ENCODE measurements at regions of chr11 and their contacts with region 1.

Region 1: GRCh38 chr11:61627567-61628445 is 46.9 kb upstream of the SYT7 start:
- DNase-seq: no peak
- H3K4me3 ChIP-seq: no peak overlapping the region
- CTCF ChIP-seq: peak; percentile 84

Region 2: DNA sequence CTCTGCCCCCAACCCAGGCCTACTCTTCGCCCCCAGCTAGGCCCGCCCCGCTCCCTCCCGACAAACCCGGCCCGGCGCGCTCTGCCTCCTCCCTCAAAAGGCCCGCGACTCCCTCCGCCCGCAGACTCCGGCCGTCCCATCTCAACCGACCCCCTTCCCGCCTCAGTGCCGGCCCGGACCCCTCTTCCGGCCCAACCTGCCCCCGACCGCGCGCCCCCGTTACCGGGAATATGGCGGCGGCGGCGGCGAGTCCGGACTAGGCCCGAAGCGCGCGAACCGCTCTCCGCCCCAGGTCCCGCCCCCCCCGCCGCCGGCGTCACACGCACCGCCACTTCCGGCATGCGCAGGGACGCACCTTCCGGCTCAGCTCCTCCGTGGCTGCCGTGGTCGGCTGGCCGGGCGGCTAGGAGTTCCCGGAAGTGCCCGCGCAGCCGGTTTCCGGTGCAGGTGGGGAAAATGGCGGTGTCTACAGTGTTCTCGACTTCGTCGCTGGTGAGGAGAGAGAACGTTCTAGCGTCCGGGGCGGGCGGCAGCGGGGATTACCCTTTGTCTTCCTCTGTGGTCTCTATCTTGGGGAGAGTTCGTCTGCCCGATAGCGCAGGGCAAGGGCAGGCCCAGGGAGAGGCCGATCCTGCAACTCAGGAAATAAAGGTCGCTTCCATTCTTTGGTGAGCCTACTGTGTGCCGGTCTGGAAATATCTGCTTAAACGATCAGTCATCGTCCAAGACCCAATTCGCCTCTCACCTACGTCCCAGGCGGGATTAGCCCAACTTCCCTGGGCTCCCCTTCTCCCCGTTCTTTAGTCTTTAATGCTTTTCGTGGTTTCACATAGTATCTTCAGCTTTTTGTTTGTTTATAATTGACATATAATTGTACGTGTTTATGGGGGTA is 197.9 kb before region 1 on chr11 and contains the starts of genes CPSF7 and SDHAF2:
- CTCF ChIA-PET with region 1: interaction called, 10 read pairs
- POLR2A ChIA-PET with region 1: no interaction called
- DNase-seq: peak; percentile 63
- H3K4me3 ChIP-seq: peak within 1 kb of the TSS; percentile 99
- CTCF ChIP-seq: no peak

Region 3: DNA sequence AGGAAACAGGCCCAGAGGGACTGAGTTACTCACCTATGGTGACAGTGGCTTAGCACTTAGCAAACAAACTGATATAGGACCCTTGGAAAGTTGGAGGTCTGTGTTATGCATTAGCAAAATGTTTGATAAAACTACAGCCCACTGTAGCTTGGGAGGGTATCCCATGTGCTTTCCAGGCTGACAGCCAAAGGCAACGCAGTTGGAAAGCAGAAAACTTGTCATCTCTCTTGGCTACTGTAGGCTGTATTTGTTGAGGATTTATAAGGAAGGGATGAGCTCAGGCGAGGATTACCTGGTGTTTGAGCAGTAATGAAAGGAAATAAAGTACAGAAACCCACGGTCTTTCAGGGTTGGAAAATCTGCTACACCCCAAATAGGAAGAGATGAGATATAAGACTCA is 174.1 kb before region 1 on chr11:
- CTCF ChIA-PET with region 1: interaction called, 283 read pairs
- POLR2A ChIA-PET with region 1: interaction called, 3 read pairs
- DNase-seq: no peak
- H3K4me3 ChIP-seq: no peak overlapping the region
- CTCF ChIP-seq: no peak

Region 4: DNA sequence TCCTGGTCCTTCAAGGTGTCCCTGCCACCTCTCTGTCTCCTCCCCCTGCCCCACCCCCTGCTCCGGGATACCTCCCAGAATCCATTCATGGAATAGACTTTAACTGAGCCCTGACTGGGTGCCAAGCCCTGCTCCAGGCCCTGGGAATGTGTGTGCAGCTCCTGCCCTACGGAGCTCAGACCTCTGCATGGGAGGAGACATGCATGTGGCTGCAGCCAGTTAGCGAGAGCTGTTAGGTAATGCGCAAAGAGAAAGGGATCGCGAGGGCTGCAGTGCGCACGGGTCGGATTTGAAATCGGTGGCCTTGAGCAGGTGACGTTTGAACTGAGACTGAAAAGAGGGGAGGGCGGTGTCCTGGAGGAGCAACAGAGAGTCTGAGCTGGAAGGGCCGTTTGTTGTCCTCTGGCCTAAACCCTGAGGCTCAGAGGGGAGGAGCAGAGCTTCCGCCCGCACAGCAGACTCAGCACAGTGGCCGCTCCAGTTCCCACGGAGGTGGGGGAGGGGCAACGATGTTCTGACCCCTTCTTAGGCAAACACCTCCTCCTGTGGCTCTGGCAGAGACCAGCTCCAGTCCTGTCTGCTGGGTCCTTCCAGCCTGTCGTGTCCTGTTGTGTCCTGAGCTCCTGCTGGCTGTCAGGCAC is 139.0 kb before region 1 on chr11:
- CTCF ChIA-PET with region 1: interaction called, 22 read pairs
- POLR2A ChIA-PET with region 1: no interaction called
- DNase-seq: no peak
- H3K4me3 ChIP-seq: no peak overlapping the region
- CTCF ChIP-seq: no peak

Region 5: GRCh38 chr11:61587521-61588453 is 40.0 kb before region 1 on chr11:
- CTCF ChIA-PET with region 1: interaction called, 10 read pairs
- POLR2A ChIA-PET with region 1: no interaction called
- DNase-seq: no peak
- H3K4me3 ChIP-seq: peak overlapping the region; percentile 30
- CTCF ChIP-seq: peak; percentile 2

Region 6: DNA sequence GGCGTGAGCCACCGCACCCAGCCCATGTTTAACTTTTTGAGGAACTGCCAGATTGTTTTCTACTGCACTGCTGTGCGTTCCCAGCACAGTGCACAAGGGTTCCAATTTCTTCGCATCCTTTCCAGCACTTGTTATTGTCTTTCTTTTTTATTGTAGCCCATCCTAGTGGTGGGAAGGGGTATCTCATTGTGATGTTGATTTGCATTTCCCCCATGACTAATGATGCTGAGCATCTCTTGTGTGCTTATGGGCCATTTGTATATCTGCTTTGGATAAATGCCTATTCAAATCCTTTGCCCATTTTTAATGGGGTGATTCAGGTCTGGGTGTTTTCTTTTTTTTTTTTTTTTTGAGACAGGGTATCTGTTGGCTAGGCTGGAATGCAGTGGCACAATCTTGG is 10.3 kb before region 1 on chr11:
- CTCF ChIA-PET with region 1: interaction called, 19 read pairs
- POLR2A ChIA-PET with region 1: no interaction called
- DNase-seq: no peak
- H3K4me3 ChIP-seq: no peak overlapping the region
- CTCF ChIP-seq: no peak

Region 7: DNA sequence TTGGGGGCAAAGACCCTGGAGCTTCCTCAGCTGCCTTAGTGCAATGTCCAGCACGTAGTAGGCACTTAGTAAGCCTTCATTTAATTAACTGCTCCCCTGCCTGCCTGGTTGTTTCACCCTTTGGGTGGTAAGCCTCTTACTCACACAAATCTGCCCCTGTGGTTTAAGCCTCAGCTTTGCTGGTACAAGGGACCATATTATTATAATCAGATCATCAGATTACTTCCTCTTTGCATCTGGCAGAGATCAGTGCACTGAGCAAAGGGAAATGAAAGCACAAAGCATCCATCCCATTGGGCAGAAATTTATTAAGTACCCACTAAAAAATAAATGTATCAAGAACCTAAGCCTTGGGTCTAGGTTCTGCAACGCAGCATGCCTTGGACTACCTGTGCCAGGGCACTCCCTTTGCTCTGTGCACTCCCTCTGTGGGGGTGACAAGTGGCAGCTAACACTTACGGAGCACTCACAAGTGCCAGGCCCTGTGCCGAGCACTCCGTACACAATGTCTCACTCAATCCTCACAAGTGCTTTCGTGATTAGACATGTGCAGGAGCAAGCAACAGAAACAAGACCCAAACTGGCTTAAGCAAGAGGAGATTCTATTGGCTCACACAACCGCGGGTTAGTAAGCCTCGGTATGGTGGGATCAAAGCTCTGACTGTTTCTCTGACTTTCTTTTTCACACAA is 17.5 kb after region 1 on chr11:
- CTCF ChIA-PET with region 1: interaction called, 59 read pairs
- POLR2A ChIA-PET with region 1: no interaction called
- DNase-seq: no peak
- H3K4me3 ChIP-seq: no peak overlapping the region
- CTCF ChIP-seq: no peak